ENCODE measurements at regions of chr17 and their contacts with region 1.

Region 1: GRCh38 chr17:63082273-63082993 is 116.4 kb downstream of the TANC2 start:
- DNase-seq: no peak
- ATAC-seq: no peak
- H3K4me3 ChIP-seq: no peak overlapping the region
- H3K27ac ChIP-seq: no peak overlapping the region
- H3K4me1 ChIP-seq: no peaks in the 10 kb centered on the region
- H3K27me3 ChIP-seq: no peaks in the 10 kb centered on the region
- CTCF ChIP-seq: peak; percentile 44

Region 2: DNA sequence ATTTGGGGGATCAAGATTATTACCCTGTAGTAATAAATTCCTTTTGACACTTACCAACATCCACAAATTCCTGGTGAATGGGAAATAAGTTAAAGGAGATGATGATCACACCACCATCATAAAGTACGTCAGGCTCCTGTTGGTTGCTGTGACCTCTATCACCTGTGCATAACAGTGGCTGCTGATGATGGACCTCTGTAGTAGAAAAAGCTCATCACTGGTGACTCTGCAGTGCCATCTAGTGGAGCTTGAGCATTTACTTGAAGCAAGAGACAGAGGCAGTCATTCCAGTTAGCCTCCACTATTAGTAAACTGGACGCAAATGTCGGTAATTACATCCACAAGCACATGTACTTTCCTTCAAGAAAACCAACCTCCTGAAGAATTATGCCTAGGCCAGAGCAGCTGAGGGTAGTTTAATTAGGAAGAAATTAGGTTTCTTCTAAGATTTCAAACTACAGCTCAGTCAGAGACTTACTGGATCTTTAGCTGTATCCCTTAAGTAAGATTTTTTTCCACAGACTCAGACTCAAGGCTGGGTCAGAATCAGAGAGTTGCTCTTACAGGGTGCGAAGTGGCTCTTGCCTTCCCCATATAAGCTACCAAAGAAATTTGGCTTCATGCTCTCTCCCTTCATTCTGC is 324.4 kb after region 1 on chr17:
- intact Hi-C with region 1: loop called (anchors 10 kb)
- DNase-seq: no peak
- ATAC-seq: peak; percentile 91
- H3K4me3 ChIP-seq: no peak overlapping the region
- H3K27ac ChIP-seq: no peak overlapping the region
- H3K4me1 ChIP-seq: no peaks in the 10 kb centered on the region
- H3K27me3 ChIP-seq: no peaks in the 10 kb centered on the region
- CTCF ChIP-seq: peak; percentile 80